IMR-90 (cell line): ENCODE measurements at regions of chr17 and their contacts with region 1.

Region 1: GRCh38 chr17:67244431-67245072 is 444 bp downstream of the HELZ start:
- DNase-seq: no peak
- ATAC-seq: peak; percentile 21
- H3K4me3 ChIP-seq: peak overlapping the region; percentile 83
- H3K27ac ChIP-seq: peak overlapping the region; percentile 76
- H3K4me1 ChIP-seq: peaks cover 2% of the 10 kb centered on the region; the same call in 1 of the 2 replicates
- H3K27me3 ChIP-seq: no peaks in the 10 kb centered on the region
- CTCF ChIP-seq: no peak
- POLR2A ChIP-seq: no peak
- RAD21 ChIP-seq: no peak

Region 2: DNA sequence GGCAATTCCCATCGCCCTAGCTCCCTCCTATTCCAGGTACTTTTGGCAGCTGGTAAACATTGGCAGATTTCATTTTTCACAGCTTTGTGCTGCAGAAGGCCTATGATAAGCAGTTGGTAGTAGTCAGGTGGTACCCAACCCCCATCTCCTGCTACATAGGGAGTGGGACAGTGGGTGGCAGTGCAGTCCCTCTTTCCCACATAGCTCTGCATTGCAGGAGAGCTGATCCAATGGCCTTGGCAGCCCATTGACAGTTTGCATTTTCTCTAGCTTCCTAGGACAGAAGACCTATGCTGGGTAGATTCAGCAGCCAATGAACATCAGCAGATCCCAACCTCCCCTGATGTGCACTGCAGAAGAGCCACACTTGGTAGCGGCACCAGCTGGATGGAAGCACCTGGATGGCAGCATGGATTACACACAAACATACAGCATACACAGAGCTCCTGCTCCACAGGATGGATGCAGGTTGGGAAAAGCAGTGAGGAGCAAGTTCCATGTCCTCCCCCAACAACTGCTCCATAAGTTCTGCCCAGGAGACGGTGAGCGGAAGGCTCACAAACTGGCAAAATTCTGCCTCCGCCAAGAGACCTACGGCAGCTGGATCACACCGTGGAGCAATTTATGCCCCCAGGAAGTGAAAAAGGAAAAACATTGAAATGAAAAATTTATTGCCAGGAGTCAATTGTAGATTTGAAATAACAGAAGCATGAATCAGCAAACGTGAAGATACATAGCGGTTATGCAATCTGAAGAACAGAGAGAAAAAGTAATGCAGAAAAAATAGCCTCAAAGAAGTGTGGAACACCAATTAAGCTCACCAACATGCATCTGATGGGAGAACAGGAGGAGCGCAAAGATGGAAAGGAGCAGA is 104.5 kb before region 1 on chr17:
- CTCF ChIA-PET with region 1: no interaction called
- POLR2A ChIA-PET with region 1: no interaction called
- dilution Hi-C with region 1: no loop called
- in situ Hi-C with region 1: no loop called
- intact Hi-C with region 1: no loop called
- DNase-seq: peak; percentile 42
- ATAC-seq: no peak
- H3K4me3 ChIP-seq: no peak overlapping the region
- H3K27ac ChIP-seq: no peak overlapping the region
- H3K4me1 ChIP-seq: peaks cover 9% of the 10 kb centered on the region
- H3K27me3 ChIP-seq: no peaks in the 10 kb centered on the region
- CTCF ChIP-seq: 0 out of 2 replicates have a peak, but pooled peaks have one; percentile 10
- POLR2A ChIP-seq: no peak
- RAD21 ChIP-seq: no peak

Region 3: GRCh38 chr17:67157732-67158639 is 86.6 kb before region 1 on chr17:
- CTCF ChIA-PET with region 1: no interaction called
- POLR2A ChIA-PET with region 1: no interaction called
- dilution Hi-C with region 1: no loop called
- in situ Hi-C with region 1: no loop called
- intact Hi-C with region 1: no loop called
- DNase-seq: peak; percentile 57
- ATAC-seq: peak; percentile 85
- H3K4me3 ChIP-seq: no peak overlapping the region
- H3K27ac ChIP-seq: no peak overlapping the region
- H3K4me1 ChIP-seq: no peaks in the 10 kb centered on the region
- H3K27me3 ChIP-seq: no peaks in the 10 kb centered on the region
- CTCF ChIP-seq: peak; percentile 55
- POLR2A ChIP-seq: no peak
- RAD21 ChIP-seq: peak; percentile 68

Region 4: DNA sequence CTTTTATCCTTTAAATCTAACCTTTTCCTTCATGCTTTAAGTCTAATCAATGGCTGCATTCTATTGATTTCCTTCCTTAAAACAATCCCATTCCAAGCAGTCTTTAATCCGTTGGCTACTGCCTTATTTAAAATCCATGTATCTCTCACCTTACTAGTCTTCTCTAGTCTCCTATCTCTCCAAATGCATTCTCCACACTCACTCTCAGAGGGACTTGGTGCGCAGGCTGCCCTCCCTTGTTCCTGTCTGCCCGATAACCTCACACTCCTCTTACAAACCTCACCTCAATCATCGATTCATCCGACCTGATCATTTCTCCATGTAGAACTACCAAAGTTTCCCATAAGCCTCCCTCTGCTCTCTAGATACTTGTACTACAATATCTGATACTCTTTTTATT is 98.7 kb after region 1 on chr17:
- CTCF ChIA-PET with region 1: no interaction called
- POLR2A ChIA-PET with region 1: no interaction called
- dilution Hi-C with region 1: no loop called
- in situ Hi-C with region 1: no loop called
- intact Hi-C with region 1: loop called (anchors 5 kb)
- DNase-seq: no peak
- ATAC-seq: no peak
- H3K4me3 ChIP-seq: no peak overlapping the region
- H3K27ac ChIP-seq: no peak overlapping the region
- H3K4me1 ChIP-seq: 0 out of 2 replicates have a peak, but pooled peaks cover 2% of the 10 kb centered on the region
- H3K27me3 ChIP-seq: no peaks in the 10 kb centered on the region
- CTCF ChIP-seq: no peak
- POLR2A ChIP-seq: no peak
- RAD21 ChIP-seq: no peak

Region 5: GRCh38 chr17:67366193-67367157 is 121.9 kb after region 1 on chr17 and contains the start of gene PSMD12:
- CTCF ChIA-PET with region 1: no interaction called
- POLR2A ChIA-PET with region 1: interaction called, 16 read pairs
- dilution Hi-C with region 1: no loop called
- in situ Hi-C with region 1: no loop called
- intact Hi-C with region 1: no loop called
- DNase-seq: peak; percentile 88
- ATAC-seq: peak; percentile 99
- H3K4me3 ChIP-seq: peak within 1 kb of the TSS; percentile 82
- H3K27ac ChIP-seq: peak within 1 kb of the TSS; percentile 99
- H3K4me1 ChIP-seq: peaks cover 5% of the 10 kb centered on the region
- H3K27me3 ChIP-seq: no peaks in the 10 kb centered on the region
- CTCF ChIP-seq: no peak
- POLR2A ChIP-seq: peak; percentile 92
- RAD21 ChIP-seq: no peak
- total RNA-seq, gene PSMD12: 17.9 and 48.9 TPM in 2 replicates